Gastrocnemius medialis (tissue), 4 donors: ENCODE measurements at regions of chr3 and their contacts with region 1.

Region 1: DNA sequence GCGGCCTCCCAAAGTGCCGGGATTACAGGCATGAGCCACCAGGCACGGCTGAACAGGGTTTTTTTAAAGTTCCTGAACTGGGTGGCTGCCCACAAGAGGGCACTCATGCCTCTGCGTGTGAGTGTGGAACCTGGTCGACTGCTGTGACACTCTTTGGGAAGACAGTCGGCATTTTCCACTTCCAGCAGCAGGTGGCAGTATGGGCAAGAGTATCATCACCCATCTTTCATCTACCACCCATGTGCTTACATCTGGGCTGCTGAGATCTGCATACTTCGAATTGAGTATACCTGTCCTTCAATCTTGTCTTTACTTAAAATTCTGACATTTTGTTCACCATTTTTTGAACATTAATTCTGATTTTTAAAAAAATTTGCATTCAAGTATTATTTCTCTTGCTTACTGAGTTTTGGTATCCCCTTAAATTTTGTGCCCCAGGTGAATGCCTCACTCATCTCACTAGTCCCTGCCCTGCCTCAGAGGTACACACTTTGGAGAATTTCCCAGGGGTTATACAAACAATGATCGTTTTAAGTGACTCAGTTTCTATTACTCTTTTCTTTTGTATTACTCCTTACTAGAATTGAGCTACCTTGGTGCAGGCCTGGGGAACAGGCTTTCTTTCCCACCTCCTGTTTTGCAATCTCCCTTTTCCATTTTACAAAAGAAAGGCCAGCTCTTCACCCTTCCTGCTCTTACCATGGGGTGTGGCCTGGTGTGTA is 11.8 kb downstream of the CLEC3B start:
- DNase-seq: peak; percentile 87 to 93
- ATAC-seq: peak; percentile 88 to 91
- H3K4me3 ChIP-seq: no peak overlapping the region
- H3K27ac ChIP-seq: peak overlapping the region in 3 of 4 donors; percentile 13 to 53 (median 30)
- H3K4me1 ChIP-seq: peaks cover 0 to 22% of the 10 kb centered on the region in 2 donors
- H3K27me3 ChIP-seq: no peaks in the 10 kb centered on the region
- CTCF ChIP-seq: peak; percentile 92 to 98 (median 93)
- POLR2A ChIP-seq: no peak

Region 2: GRCh38 chr3:45109771-45110508 is 72.0 kb after region 1 on chr3:
- in situ Hi-C with region 1: no loop called
- intact Hi-C with region 1: loop called (anchors 5 kb)
- DNase-seq: no peak
- ATAC-seq: no peak
- H3K4me3 ChIP-seq: no peak overlapping the region
- H3K27ac ChIP-seq: no peak overlapping the region
- H3K4me1 ChIP-seq: peaks cover 21 to 26% of the 10 kb centered on the region in 2 donors
- H3K27me3 ChIP-seq: no peaks in the 10 kb centered on the region
- CTCF ChIP-seq: no peak
- POLR2A ChIP-seq: no peak

Region 3: DNA sequence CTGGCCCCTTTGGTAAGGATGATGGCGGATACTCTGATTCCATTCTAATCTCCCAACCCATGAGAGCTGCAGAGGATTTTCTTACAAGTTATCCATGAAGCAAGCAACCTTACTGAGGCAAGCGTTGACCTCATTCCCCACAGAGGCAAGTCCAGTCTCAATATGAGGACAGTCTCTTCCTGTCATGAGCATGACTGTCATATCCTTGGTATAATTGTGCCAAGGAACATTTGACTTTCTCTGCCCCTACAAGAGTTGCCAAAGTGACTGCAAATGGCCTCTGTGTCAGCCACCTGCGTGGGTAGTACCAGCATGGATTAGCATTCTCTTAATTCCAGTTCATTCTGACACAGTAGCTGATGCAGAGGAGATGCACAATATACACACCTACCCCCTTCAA is 259.4 kb after region 1 on chr3:
- in situ Hi-C with region 1: no loop called
- intact Hi-C with region 1: no loop called
- DNase-seq: no peak
- ATAC-seq: no peak
- H3K4me3 ChIP-seq: no peak overlapping the region
- H3K27ac ChIP-seq: no peak overlapping the region
- H3K4me1 ChIP-seq: no peaks in the 10 kb centered on the region
- H3K27me3 ChIP-seq: no peaks in the 10 kb centered on the region
- CTCF ChIP-seq: no peak
- POLR2A ChIP-seq: no peak

Region 4: DNA sequence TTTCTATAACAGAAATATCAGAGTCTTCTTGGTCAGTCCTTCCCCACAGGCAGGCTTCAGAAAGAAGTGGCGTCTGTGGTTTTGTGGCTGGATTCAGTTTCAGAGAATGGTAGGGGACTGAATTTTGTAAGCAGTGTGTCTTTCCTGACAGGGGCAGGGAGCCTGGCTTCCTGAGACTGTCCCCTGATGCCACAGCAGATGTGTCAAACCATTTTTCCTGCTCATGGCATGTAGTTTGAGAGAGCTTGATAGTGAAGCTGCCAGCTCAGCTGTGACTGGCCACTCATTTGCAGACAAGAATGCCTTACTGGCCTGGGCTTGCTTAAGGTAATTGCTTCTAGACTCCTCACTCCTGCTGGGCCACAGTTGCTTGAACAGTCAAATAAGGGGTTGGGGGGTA is 376.9 kb after region 1 on chr3:
- in situ Hi-C with region 1: no loop called
- intact Hi-C with region 1: loop called (anchors 10 kb)
- DNase-seq: no peak
- ATAC-seq: no peak
- H3K4me3 ChIP-seq: no peak overlapping the region
- H3K27ac ChIP-seq: no peak overlapping the region
- H3K4me1 ChIP-seq: peaks cover 11 to 12% of the 10 kb centered on the region in 2 donors
- H3K27me3 ChIP-seq: no peaks in the 10 kb centered on the region
- CTCF ChIP-seq: no peak
- POLR2A ChIP-seq: no peak

Region 5: GRCh38 chr3:45507820-45508317 is 470.0 kb after region 1 on chr3:
- in situ Hi-C with region 1: loop called in 1 of 4 experiments (anchors 25 kb)
- intact Hi-C with region 1: no loop called
- DNase-seq: peak in 1 of 2 donors; percentile 30
- ATAC-seq: peak in 1 of 2 donors; percentile 34
- H3K4me3 ChIP-seq: no peak overlapping the region
- H3K27ac ChIP-seq: peak overlapping the region in 2 of 4 donors; percentile 8 to 13
- H3K4me1 ChIP-seq: no peaks in the 10 kb centered on the region
- H3K27me3 ChIP-seq: no peaks in the 10 kb centered on the region
- CTCF ChIP-seq: peak in 4 of 5 experiments; percentile 3 to 46 (median 20)
- POLR2A ChIP-seq: no peak